Left lung (tissue), 14 donors: ENCODE measurements at regions of chr4 and their contacts with region 1.

Region 1: DNA sequence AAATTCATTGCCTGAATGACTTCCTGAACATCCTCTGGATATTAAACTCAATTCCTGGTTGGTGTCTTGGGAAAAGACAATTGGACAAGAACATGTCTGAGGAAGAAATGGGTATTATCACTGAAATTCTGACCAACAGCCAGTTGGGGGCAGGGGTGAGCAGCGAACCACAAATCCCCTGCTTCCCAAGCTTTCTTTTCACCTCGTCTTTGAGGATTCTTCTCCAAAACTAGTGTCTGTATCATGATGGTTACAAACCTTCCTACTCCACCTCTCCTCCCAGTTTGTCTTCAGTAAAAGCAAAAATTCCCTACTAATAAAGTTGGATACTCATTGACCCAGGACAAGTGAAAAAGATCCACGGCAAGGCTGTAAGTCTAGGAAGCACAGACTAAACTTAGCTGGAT is 48.3 kb upstream of the WDR1 start:
- DNase-seq: peak in 1 of 4 donors; percentile 32
- ATAC-seq: peak; percentile 59
- H3K4me3 ChIP-seq: no peak overlapping the region
- H3K27ac ChIP-seq: no peak overlapping the region
- H3K4me1 ChIP-seq: no peaks in the 10 kb centered on the region
- H3K27me3 ChIP-seq: no peaks in the 10 kb centered on the region
- CTCF ChIP-seq: peak; percentile 44 to 51

Region 2: GRCh38 chr4:10033191-10033881 is 131.5 kb before region 1 on chr4:
- intact Hi-C with region 1: no loop called
- DNase-seq: peak in 1 of 4 donors; percentile 70
- ATAC-seq: peak; percentile 74
- H3K4me3 ChIP-seq: no peak overlapping the region
- H3K27ac ChIP-seq: peak overlapping the region; percentile 67 to 70
- H3K4me1 ChIP-seq: peaks cover 16 to 35% of the 10 kb centered on the region in 2 donors
- H3K27me3 ChIP-seq: no peaks in the 10 kb centered on the region
- CTCF ChIP-seq: no peak

Region 3: GRCh38 chr4:10403633-10404445 is 239.0 kb after region 1 on chr4:
- intact Hi-C with region 1: loop called in 1 of 2 experiments (anchors 5 kb)
- DNase-seq: peak in 2 of 4 donors; percentile 12 to 45
- ATAC-seq: peak; percentile 74
- H3K4me3 ChIP-seq: no peak overlapping the region
- H3K27ac ChIP-seq: no peak overlapping the region
- H3K4me1 ChIP-seq: no peaks in the 10 kb centered on the region
- H3K27me3 ChIP-seq: no peaks in the 10 kb centered on the region
- CTCF ChIP-seq: peak; percentile 33

Region 4: DNA sequence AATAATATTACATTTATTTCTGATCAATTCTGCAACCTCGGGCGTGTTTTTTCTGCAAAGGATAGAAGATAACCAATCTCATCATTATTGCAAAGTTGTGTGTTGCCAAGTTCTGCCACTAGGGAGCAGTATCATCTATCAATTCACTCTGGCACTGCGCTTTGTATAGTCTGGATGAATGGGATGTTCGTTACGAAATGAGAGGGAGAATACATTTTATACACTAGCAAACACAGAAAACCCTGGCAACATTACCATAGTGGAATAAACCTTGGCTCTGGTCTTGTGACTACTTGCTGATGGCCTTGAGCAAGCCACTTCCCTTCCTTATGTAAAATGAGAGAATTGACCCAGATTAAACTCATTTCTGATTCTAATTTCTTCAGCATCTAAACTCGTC is 389.8 kb after region 1 on chr4:
- intact Hi-C with region 1: loop called in 1 of 2 experiments (anchors 5 kb)
- DNase-seq: peak in 2 of 4 donors; percentile 59 to 78
- ATAC-seq: peak; percentile 94
- H3K4me3 ChIP-seq: no peak overlapping the region
- H3K27ac ChIP-seq: no peak overlapping the region
- H3K4me1 ChIP-seq: peaks cover 0 to 17% of the 10 kb centered on the region in 2 donors
- H3K27me3 ChIP-seq: no peaks in the 10 kb centered on the region
- CTCF ChIP-seq: peak; percentile 66 to 71